Activated T-helper 2 cell treated with anti-CD3 and anti-CD28 coated beads, Interferon-gamma antibody, Interleukin-2, Interleukin-4, amounts not matched to agents 10 μg/mL and 5 μg/mL and 100 μg/mL, durations not matched to agents 14 hours and 24 hours and 36 hours (primary cell): ENCODE measurements at regions of chr10 and their contacts with region 1.

Region 1: GRCh38 chr10:124697830-124698544 is 46.2 kb downstream of the FAM53B start:
- DNase-seq: no peak
- H3K4me3 Mint-ChIP-seq: no peak overlapping the region
- H3K27ac Mint-ChIP-seq: peak overlapping the region; percentile 94
- H3K4me1 Mint-ChIP-seq: peaks cover 90% of the 10 kb centered on the region
- H3K27me3 Mint-ChIP-seq: no peaks in the 10 kb centered on the region

Region 2: DNA sequence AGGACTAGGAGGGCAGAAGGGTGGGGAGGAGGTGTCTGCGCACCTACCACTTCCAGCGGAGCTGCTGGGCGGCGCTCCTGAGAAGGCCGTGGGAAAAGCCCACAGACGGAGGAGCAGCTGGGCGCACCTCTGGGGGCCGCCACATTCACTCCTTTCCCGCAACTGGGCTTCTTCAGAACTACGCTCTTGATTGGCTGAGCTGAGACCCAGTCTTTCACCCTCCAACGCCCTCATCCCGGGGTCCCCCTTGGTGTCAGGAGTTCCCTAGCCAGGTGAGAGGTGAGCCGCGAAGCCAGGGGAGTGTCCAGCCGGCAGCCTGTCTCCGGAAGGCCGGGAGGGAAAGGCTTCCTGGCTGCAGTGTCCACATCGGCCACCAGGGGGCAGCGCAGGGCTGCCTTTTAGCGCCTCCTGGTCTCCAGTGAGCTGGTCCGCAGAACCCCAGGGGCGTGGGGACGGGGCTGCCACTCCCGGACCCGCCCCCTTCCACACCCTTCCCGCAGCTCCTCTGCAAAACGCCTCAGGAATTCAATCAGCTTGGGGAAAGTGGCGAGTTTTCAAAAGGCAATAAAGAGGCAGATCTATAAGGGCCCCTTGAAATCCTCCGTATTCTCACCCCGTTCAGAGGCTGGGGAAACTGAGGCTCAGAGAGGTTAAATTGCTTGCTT is 703.4 kb before region 1 on chr10:
- intact Hi-C with region 1: no loop called
- DNase-seq: peak; percentile 65
- H3K4me3 Mint-ChIP-seq: no peak overlapping the region
- H3K27ac Mint-ChIP-seq: no peak overlapping the region
- H3K4me1 Mint-ChIP-seq: peaks cover 6% of the 10 kb centered on the region
- H3K27me3 Mint-ChIP-seq: peaks cover 51% of the 10 kb centered on the region

Region 3: DNA sequence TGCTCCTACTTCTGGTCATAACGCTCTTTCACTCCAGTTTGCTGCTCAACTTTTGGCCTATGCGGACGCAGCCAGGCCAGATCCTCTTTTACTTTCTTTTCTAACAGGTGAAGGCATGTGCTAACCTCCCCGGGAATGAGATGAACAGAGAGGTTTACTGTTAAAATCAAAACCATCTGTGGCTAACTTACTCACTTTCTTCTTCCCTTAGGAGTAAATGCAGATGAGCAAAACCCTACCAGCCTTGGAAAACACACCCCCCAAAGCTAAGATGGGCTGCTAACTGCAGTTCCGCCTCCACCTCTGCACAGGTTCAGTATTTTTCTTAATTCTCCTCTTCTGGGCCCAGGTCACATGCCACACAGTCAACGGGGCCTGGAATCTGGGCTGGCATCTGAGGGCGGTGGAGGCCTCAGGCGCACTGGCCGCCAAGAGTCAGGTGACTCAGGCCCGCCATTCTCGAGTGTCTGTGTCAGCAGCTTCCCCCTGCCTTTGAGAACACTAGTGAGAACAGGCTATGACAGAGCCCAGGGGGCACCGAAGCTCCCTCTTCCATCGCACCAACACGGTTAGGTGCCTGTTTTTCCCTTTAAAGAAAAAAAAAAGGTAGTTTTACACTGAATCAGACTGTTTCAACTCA is 35.1 kb after region 1 on chr10:
- intact Hi-C with region 1: loop called (anchors 1 kb)
- DNase-seq: no peak
- H3K4me3 Mint-ChIP-seq: peak overlapping the region; percentile 34
- H3K27ac Mint-ChIP-seq: peak overlapping the region; percentile 77
- H3K4me1 Mint-ChIP-seq: peaks cover 57% of the 10 kb centered on the region
- H3K27me3 Mint-ChIP-seq: no peaks in the 10 kb centered on the region

Region 4: GRCh38 chr10:124791378-124792348 is 93.7 kb after region 1 on chr10 and contains the start of gene EEF1AKMT2:
- intact Hi-C with region 1: loop called (anchors 5 kb)
- DNase-seq: peak; percentile 77
- H3K4me3 Mint-ChIP-seq: peak within 1 kb of the TSS; percentile 97
- H3K27ac Mint-ChIP-seq: peak within 1 kb of the TSS; percentile 95
- H3K4me1 Mint-ChIP-seq: peaks cover 15% of the 10 kb centered on the region
- H3K27me3 Mint-ChIP-seq: peaks cover 7% of the 10 kb centered on the region
- total RNA-seq, gene EEF1AKMT2: 20.9 and 21.0 TPM in 2 replicates